CD4-positive, alpha-beta T cell (primary cell): ENCODE measurements at regions of chr4 and their contacts with region 1.

Region 1: GRCh38 chr4:25234390-25235370 is 847 bp downstream of the PI4K2B start:
- DNase-seq: peak in 13 of 14 experiments; percentile 5 to 88 (median 18)
- ATAC-seq: peak; percentile 51
- H3K4me3 ChIP-seq: peak overlapping the region; percentile 86
- H3K4me3 Mint-ChIP-seq: peak overlapping the region; percentile 87
- H3K27ac ChIP-seq: peak overlapping the region; percentile 71 to 88
- H3K27ac Mint-ChIP-seq: peak overlapping the region; percentile 91
- H3K4me1 ChIP-seq: peaks cover 29% of the 10 kb centered on the region
- H3K4me1 Mint-ChIP-seq: peaks cover 41% of the 10 kb centered on the region
- H3K27me3 ChIP-seq: no peaks in the 10 kb centered on the region
- H3K27me3 Mint-ChIP-seq: no peaks in the 10 kb centered on the region
- CTCF ChIP-seq: peak; percentile 70

Region 2: DNA sequence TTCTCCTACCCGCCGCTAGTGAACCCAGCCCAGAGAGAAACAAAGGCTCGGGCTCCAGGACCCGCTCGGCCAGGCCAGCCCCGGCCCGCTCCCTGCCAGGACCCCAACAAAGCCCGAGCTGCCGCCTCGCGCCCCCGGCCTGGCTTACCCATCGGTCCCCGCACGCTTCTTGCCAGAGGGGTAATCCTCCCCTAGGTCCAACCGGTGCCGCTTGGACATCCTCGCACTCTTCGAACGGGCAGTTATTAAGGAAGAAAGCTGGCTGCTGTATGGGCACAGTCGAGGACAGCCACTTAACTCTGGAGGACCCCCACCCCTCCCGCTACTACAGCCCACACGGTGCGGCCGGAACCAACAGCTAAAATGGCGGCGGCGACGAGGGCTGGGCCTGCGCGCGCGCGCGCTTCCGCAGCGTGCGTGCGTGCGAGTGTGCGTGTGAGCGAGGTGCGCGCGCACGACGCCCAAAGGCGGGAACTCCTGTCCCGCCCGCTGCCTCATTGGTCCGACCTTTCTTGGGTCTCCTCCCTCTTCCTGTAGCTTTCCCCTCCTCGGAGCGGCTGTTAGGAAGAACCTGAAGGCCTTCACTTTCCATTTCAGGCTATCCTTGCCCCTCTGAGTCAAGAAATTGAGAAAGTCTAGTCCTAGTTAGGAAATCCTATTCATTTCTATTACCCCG is 650.4 kb before region 1 on chr4 and contains the start of gene DHX15:
- CTCF ChIA-PET with region 1: no interaction called
- POLR2A ChIA-PET with region 1: no interaction called
- intact Hi-C with region 1: loop called in 1 of 2 experiments (anchors 5 kb)
- DNase-seq: peak; percentile 83 to 99 (median 90)
- ATAC-seq: peak; percentile 93
- H3K4me3 ChIP-seq: peak within 1 kb of the TSS; percentile 95
- H3K4me3 Mint-ChIP-seq: peak within 1 kb of the TSS; percentile 96
- H3K27ac ChIP-seq: peak within 1 kb of the TSS; percentile 94 to 96
- H3K27ac Mint-ChIP-seq: peak within 1 kb of the TSS; percentile 86
- H3K4me1 ChIP-seq: peaks cover 28% of the 10 kb centered on the region
- H3K4me1 Mint-ChIP-seq: peaks cover 41% of the 10 kb centered on the region
- H3K27me3 ChIP-seq: no peaks in the 10 kb centered on the region
- H3K27me3 Mint-ChIP-seq: peaks cover 5% of the 10 kb centered on the region
- CTCF ChIP-seq: no peak
- total RNA-seq, gene DHX15: 208 to 209 TPM

Region 3: GRCh38 chr4:25144870-25145481 is 89.7 kb before region 1 on chr4:
- CTCF ChIA-PET with region 1: no interaction called
- POLR2A ChIA-PET with region 1: no interaction called
- intact Hi-C with region 1: no loop called
- DNase-seq: peak in 3 of 14 experiments; percentile 19 to 35 (median 19)
- ATAC-seq: no peak
- H3K4me3 ChIP-seq: no peak overlapping the region
- H3K4me3 Mint-ChIP-seq: no peak overlapping the region
- H3K27ac ChIP-seq: no peak overlapping the region
- H3K27ac Mint-ChIP-seq: no peak overlapping the region
- H3K4me1 ChIP-seq: no peaks in the 10 kb centered on the region
- H3K4me1 Mint-ChIP-seq: no peaks in the 10 kb centered on the region
- H3K27me3 ChIP-seq: no peaks in the 10 kb centered on the region
- H3K27me3 Mint-ChIP-seq: no peaks in the 10 kb centered on the region
- CTCF ChIP-seq: peak; percentile 47

Region 4: DNA sequence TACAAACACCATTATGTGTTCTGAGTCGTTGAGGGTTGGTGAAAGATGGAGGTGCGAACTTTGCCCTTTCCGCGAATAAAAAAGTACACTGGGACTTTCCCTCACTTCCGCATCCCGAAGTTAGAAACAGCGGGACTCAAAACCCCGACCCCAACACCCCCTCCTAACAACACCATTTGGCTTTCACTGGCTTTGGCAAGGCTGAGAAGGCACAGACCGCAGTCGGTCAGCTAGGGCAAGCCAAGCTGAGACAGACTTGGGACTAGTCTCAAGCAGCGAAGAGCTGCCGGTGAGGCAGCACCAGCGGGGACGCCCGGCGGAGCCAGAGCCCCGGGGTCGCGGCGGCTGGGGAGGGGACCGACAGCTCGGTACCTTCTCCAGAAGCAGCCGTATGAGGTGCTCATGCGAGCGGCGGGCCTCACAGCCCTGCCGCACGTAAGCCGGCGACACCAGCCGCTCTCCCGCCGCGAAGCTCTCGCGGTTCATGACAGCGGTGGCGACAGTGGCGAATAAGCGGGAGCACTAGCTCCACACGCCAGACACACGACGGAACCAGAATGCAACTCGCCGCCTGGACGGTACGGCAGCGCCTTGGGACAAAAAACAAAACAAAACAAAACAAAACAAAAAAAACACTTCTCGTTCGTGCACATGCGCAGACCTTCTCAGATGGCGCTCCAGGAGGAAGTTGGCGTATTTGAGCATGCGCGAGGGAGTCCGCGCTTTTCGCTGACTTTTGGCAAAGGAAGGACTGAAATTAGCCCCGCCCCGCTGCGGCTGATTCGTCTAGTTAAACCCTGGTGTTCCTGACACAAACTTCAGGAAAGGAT is 74.6 kb before region 1 on chr4 and contains the start of gene SEPSECS:
- CTCF ChIA-PET with region 1: interaction called, 3 read pairs
- POLR2A ChIA-PET with region 1: interaction called, 80 read pairs
- intact Hi-C with region 1: loop called (anchors 1 to 2 kb)
- DNase-seq: peak; percentile 84 to 98 (median 92)
- ATAC-seq: peak; percentile 82
- H3K4me3 ChIP-seq: peak within 1 kb of the TSS; percentile 91
- H3K4me3 Mint-ChIP-seq: peak within 1 kb of the TSS; percentile 93
- H3K27ac ChIP-seq: peak within 1 kb of the TSS; percentile 97 to 98
- H3K27ac Mint-ChIP-seq: peak within 1 kb of the TSS; percentile 96
- H3K4me1 ChIP-seq: peaks cover 26% of the 10 kb centered on the region
- H3K4me1 Mint-ChIP-seq: peaks cover 68% of the 10 kb centered on the region
- H3K27me3 ChIP-seq: no peaks in the 10 kb centered on the region
- H3K27me3 Mint-ChIP-seq: no peaks in the 10 kb centered on the region
- CTCF ChIP-seq: no peak
- total RNA-seq, gene SEPSECS: 18.5 to 18.7 TPM

Region 5: GRCh38 chr4:25253071-25253445 is 18.4 kb after region 1 on chr4:
- CTCF ChIA-PET with region 1: no interaction called
- POLR2A ChIA-PET with region 1: interaction called, 9 read pairs
- intact Hi-C with region 1: loop called in 1 of 2 experiments (anchors 2 kb)
- DNase-seq: no peak
- ATAC-seq: no peak
- H3K4me3 ChIP-seq: no peak overlapping the region
- H3K4me3 Mint-ChIP-seq: no peak overlapping the region
- H3K27ac ChIP-seq: no peak overlapping the region
- H3K27ac Mint-ChIP-seq: no peak overlapping the region
- H3K4me1 ChIP-seq: peaks cover 8% of the 10 kb centered on the region
- H3K4me1 Mint-ChIP-seq: peaks cover 35% of the 10 kb centered on the region
- H3K27me3 ChIP-seq: no peaks in the 10 kb centered on the region
- H3K27me3 Mint-ChIP-seq: no peaks in the 10 kb centered on the region
- CTCF ChIP-seq: no peak

Region 6: DNA sequence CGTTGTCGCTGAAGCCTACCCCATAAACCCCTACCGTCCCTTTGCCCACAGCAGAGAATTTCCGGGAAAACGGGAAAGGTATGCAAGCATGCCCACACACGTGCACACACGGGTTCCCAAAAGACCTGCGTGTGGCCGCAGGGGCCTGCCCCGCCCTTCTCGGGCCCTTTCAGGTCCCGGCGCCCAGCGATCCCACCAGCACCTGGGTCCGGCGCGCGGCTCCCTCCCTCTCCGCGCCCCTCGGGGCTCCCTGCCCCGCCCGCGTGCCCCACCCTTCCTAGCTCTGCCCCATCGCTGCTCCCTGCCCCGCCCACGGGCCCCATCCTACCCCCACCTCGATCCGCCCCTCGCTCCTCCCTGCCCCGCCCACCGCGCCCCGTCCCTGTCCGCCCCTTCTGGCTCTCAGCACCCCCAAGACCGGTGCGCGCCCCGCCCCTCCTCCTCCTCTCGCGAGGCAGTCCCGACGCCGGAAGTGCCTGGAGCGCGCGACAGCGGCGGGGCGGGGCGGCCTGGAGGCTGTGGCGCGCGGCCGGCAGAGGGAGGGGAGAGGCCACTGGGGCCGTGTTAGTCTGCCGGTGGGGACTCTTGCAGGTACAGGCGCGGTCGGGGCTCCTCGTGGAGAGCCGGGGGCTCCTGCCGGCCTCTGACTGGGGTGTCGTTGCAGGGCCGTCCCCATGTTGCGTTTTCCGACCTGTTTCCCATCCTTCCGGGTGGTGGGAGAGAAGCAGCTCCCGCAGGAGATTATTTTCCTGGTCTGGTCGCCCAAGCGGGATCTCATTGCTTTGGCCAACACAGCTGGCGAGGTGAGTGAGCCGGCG is 142.3 kb after region 1 on chr4 and contains the start of gene ANAPC4:
- CTCF ChIA-PET with region 1: no interaction called
- POLR2A ChIA-PET with region 1: interaction called, 4 read pairs
- intact Hi-C with region 1: loop called (anchors 2 kb)
- DNase-seq: peak; percentile 95 to 99 (median 97)
- ATAC-seq: peak; percentile 94
- H3K4me3 ChIP-seq: peak within 1 kb of the TSS; percentile 94
- H3K4me3 Mint-ChIP-seq: no peak within 1 kb of the TSS
- H3K27ac ChIP-seq: peak within 1 kb of the TSS; percentile 42 to 48
- H3K27ac Mint-ChIP-seq: peak within 1 kb of the TSS; percentile 81
- H3K4me1 ChIP-seq: peaks cover 34% of the 10 kb centered on the region
- H3K4me1 Mint-ChIP-seq: peaks cover 7% of the 10 kb centered on the region
- H3K27me3 ChIP-seq: no peaks in the 10 kb centered on the region
- H3K27me3 Mint-ChIP-seq: no peaks in the 10 kb centered on the region
- CTCF ChIP-seq: no peak
- total RNA-seq, gene ANAPC4: 24.4 to 26.0 TPM

Region 7: GRCh38 chr4:26873391-26874026 is 1638.8 kb after region 1 on chr4:
- CTCF ChIA-PET with region 1: no interaction called
- POLR2A ChIA-PET with region 1: no interaction called
- intact Hi-C with region 1: loop called in 1 of 2 experiments (anchors 10 kb)
- DNase-seq: peak in 11 of 14 experiments; percentile 25 to 91 (median 47)
- ATAC-seq: peak; percentile 92
- H3K4me3 ChIP-seq: no peak overlapping the region
- H3K4me3 Mint-ChIP-seq: peak overlapping the region; percentile 62
- H3K27ac ChIP-seq: peak overlapping the region; percentile 24 to 49
- H3K27ac Mint-ChIP-seq: peak overlapping the region; percentile 68
- H3K4me1 ChIP-seq: peaks cover 39% of the 10 kb centered on the region
- H3K4me1 Mint-ChIP-seq: peaks cover 86% of the 10 kb centered on the region
- H3K27me3 ChIP-seq: no peaks in the 10 kb centered on the region
- H3K27me3 Mint-ChIP-seq: no peaks in the 10 kb centered on the region
- CTCF ChIP-seq: no peak